Right cardiac atrium (tissue), 5 donors: ENCODE measurements at regions of chr6 and their contacts with region 1.

Region 1: DNA sequence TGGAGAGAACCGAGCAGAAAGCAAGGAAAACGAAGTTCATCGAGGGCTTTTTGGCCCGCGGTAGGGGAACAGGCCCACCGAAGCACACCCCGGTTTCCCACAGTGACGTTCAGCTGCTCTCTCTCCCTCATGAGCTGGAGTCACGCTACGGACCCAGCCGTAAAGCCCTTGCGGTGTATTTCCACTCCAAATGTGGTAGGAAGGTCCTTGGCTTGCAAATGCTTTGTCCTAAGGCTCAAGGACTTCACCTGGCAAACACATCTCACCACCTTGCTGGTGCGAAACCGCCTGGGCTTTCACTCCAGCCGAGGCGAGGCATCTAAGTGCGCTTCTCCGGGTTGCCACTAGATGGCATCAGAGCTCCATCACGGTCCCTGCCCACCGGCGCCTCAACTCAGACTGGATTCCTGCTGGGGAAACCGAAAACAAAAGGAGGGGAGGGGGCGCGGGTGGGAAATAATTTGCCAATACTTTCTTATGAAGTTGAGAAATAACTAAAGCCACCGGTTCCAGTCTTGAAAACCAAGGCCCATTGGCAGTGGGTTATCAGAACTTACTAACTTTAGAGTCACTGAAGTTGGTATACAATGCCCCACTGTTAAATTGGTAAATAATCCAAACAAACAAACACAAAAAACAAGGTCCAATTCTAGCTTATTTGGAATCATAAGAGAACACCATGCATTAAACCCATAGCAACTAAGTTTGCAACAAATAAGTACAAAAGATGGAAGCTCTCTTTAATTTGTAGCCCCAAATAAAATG is 13.4 kb upstream of the FOXC1 start:
- DNase-seq: peak in 2 of 3 donors; percentile 77 to 79
- ATAC-seq: peak; percentile 80 to 84
- H3K4me3 ChIP-seq: no peak overlapping the region
- H3K27ac ChIP-seq: no peak overlapping the region
- H3K4me1 ChIP-seq: no peaks in the 10 kb centered on the region
- H3K27me3 ChIP-seq: no peaks in the 10 kb centered on the region

Region 2: GRCh38 chr6:2196079-2196679 is 599.9 kb after region 1 on chr6:
- intact Hi-C with region 1: loop called in 3 of 4 experiments (anchors 5 to 10 kb)
- DNase-seq: no peak
- ATAC-seq: peak; percentile 71 to 83
- H3K4me3 ChIP-seq: no peak overlapping the region
- H3K27ac ChIP-seq: no peak overlapping the region
- H3K4me1 ChIP-seq: peaks cover 2% of the 10 kb centered on the region
- H3K27me3 ChIP-seq: no peaks in the 10 kb centered on the region

Region 3: DNA sequence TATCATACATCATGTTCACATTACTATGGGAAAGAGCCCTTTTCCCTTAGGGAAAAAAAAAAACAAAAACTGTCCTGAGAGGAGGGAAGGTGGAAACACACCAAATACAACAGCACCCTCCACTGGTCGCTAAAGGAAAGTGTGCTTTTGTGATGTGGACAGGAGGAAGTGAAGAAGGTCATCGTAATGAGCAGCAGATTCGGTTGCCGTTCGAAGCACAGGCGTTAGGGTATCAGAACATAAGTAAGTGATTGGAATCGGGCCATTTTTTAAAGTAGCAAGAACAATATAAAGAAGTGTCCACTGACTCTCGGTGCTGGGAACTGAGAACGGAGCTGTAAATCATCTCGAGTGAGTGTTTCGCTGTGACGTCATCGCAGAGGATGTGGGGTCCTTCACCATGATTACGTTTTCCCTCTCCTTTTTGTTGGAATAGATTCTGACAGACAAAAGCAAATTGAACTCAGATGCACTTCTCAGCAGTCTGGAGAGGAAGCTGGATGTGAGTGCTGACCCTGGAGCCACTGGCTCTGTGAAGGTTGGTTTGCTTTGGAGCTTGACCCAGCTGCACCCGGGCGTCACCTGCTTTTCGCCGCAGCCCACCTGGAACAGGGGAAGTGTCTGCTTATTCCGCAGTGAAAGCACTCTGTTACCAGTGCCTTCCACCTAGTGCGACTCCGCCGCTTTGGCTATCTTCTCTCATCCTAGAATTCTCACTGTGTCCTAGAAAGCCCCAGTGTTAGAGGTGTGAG is 852.7 kb after region 1 on chr6:
- intact Hi-C with region 1: loop called in 2 of 4 experiments (anchors 5 to 10 kb)
- DNase-seq: peak in 1 of 3 donors; percentile 49
- ATAC-seq: peak; percentile 69 to 83
- H3K4me3 ChIP-seq: peak overlapping the region; percentile 27
- H3K27ac ChIP-seq: no peak overlapping the region
- H3K4me1 ChIP-seq: peaks cover 4% of the 10 kb centered on the region
- H3K27me3 ChIP-seq: no peaks in the 10 kb centered on the region

Region 4: DNA sequence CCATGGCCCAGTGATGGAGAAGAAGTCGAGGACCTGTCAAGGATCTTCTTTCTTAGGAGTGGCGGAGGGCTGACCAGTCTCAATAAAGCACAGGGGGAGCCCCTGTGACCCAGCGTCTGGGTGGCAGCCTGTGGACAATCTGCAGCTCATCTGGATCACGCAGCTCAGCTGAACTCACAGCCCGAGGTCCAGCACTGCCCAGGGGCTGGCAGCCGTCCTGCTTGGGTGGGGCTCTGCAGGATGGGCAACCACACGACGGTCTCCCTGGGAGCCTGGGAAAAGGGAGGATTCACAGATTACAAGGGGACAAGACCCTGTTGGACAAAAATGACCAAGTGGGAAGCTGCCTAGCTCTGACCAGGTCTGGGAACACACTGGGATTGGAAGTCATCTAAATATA is 1043.6 kb after region 1 on chr6:
- intact Hi-C with region 1: loop called in 2 of 4 experiments (anchors 5 to 10 kb)
- DNase-seq: no peak
- ATAC-seq: no peak
- H3K4me3 ChIP-seq: no peak overlapping the region
- H3K27ac ChIP-seq: no peak overlapping the region
- H3K4me1 ChIP-seq: no peaks in the 10 kb centered on the region
- H3K27me3 ChIP-seq: no peaks in the 10 kb centered on the region

Region 5: DNA sequence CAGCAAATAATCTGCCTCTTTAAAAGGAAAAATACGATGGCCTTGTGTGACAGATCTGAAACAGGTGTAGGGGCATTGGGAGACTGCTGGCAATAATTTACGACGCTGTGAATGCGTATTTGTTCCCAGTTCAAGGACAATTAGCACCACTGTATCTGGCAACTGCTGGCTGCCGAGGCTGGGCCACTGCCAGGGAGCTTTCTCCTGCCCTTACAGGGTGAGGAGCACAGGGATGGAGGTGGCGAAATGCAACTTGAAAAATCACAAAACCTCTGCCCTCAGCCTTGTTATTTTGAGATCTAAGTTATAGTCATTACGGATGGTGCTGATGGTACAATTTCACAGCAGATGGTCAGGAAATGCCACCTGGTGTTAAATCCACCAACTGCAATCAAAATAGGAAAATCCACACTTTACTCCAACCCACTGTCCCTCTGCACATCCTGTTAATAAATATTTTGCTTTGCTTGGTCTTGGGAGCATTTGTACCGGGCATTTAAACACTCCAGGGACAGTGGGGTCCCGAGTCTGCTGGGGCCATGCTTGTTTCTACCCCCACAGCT is 1148.0 kb after region 1 on chr6:
- intact Hi-C with region 1: loop called in 2 of 4 experiments (anchors 5 to 10 kb)
- DNase-seq: peak; percentile 56 to 90 (median 87)
- ATAC-seq: peak; percentile 82 to 86
- H3K4me3 ChIP-seq: no peak overlapping the region
- H3K27ac ChIP-seq: peak overlapping the region; percentile 87
- H3K4me1 ChIP-seq: no peaks in the 10 kb centered on the region
- H3K27me3 ChIP-seq: no peaks in the 10 kb centered on the region